Activated naive CD4-positive, alpha-beta T cell treated with anti-CD3 and anti-CD28 coated beads for 36 hours (primary cell): ENCODE measurements at regions of chr12 and their contacts with region 1.

Region 1: GRCh38 chr12:751192-751998 is 984 bp upstream of the WNK1 start:
- DNase-seq: peak; percentile 94
- H3K4me3 Mint-ChIP-seq: no peak overlapping the region
- H3K27ac Mint-ChIP-seq: no peak overlapping the region
- H3K4me1 Mint-ChIP-seq: peaks cover 23% of the 10 kb centered on the region
- H3K27me3 Mint-ChIP-seq: no peaks in the 10 kb centered on the region

Region 2: GRCh38 chr12:304805-305204 is 446.6 kb before region 1 on chr12:
- CTCF ChIA-PET with region 1: no interaction called
- intact Hi-C with region 1: no loop called
- DNase-seq: no peak
- H3K4me3 Mint-ChIP-seq: no peak overlapping the region
- H3K27ac Mint-ChIP-seq: no peak overlapping the region
- H3K4me1 Mint-ChIP-seq: peaks cover 37% of the 10 kb centered on the region
- H3K27me3 Mint-ChIP-seq: no peaks in the 10 kb centered on the region

Region 3: GRCh38 chr12:575948-576612 is 175.3 kb before region 1 on chr12:
- CTCF ChIA-PET with region 1: interaction called, 57 read pairs
- intact Hi-C with region 1: loop called (anchors 1 kb)
- DNase-seq: peak; percentile 80
- H3K4me3 Mint-ChIP-seq: peak overlapping the region; percentile 14
- H3K27ac Mint-ChIP-seq: no peak overlapping the region
- H3K4me1 Mint-ChIP-seq: peaks cover 29% of the 10 kb centered on the region
- H3K27me3 Mint-ChIP-seq: no peaks in the 10 kb centered on the region

Region 4: GRCh38 chr12:650983-651382 is 100.4 kb before region 1 on chr12:
- CTCF ChIA-PET with region 1: interaction called, 10 read pairs
- intact Hi-C with region 1: no loop called
- DNase-seq: no peak
- H3K4me3 Mint-ChIP-seq: no peak overlapping the region
- H3K27ac Mint-ChIP-seq: no peak overlapping the region
- H3K4me1 Mint-ChIP-seq: peaks cover 16% of the 10 kb centered on the region
- H3K27me3 Mint-ChIP-seq: no peaks in the 10 kb centered on the region

Region 5: GRCh38 chr12:716506-716905 is 34.9 kb before region 1 on chr12:
- CTCF ChIA-PET with region 1: interaction called, 9 read pairs
- intact Hi-C with region 1: loop called (anchors 5 kb)
- DNase-seq: peak; percentile 80
- H3K4me3 Mint-ChIP-seq: peak overlapping the region; percentile 0
- H3K27ac Mint-ChIP-seq: peak overlapping the region; percentile 75
- H3K4me1 Mint-ChIP-seq: peaks cover 65% of the 10 kb centered on the region
- H3K27me3 Mint-ChIP-seq: no peaks in the 10 kb centered on the region

Region 6: GRCh38 chr12:810671-811415 is 59.4 kb after region 1 on chr12:
- CTCF ChIA-PET with region 1: interaction called, 69 read pairs
- intact Hi-C with region 1: loop called (anchors 1 kb)
- DNase-seq: peak; percentile 77
- H3K4me3 Mint-ChIP-seq: no peak overlapping the region
- H3K27ac Mint-ChIP-seq: peak overlapping the region; percentile 54
- H3K4me1 Mint-ChIP-seq: peaks cover 64% of the 10 kb centered on the region
- H3K27me3 Mint-ChIP-seq: no peaks in the 10 kb centered on the region

Region 7: GRCh38 chr12:1594261-1595025 is 843.0 kb after region 1 on chr12 and contains the start of gene FBXL14:
- CTCF ChIA-PET with region 1: no interaction called
- intact Hi-C with region 1: loop called (anchors 5 kb)
- DNase-seq: peak; percentile 88
- H3K4me3 Mint-ChIP-seq: peak within 1 kb of the TSS; percentile 94
- H3K27ac Mint-ChIP-seq: peak within 1 kb of the TSS; percentile 88
- H3K4me1 Mint-ChIP-seq: peaks cover 39% of the 10 kb centered on the region
- H3K27me3 Mint-ChIP-seq: no peaks in the 10 kb centered on the region
- total RNA-seq, gene FBXL14: 11.4 to 11.9 TPM